Right ventricle myocardium superior (tissue), 1 donor: ENCODE measurements at regions of chr2 and their contacts with region 1.

Region 1: DNA sequence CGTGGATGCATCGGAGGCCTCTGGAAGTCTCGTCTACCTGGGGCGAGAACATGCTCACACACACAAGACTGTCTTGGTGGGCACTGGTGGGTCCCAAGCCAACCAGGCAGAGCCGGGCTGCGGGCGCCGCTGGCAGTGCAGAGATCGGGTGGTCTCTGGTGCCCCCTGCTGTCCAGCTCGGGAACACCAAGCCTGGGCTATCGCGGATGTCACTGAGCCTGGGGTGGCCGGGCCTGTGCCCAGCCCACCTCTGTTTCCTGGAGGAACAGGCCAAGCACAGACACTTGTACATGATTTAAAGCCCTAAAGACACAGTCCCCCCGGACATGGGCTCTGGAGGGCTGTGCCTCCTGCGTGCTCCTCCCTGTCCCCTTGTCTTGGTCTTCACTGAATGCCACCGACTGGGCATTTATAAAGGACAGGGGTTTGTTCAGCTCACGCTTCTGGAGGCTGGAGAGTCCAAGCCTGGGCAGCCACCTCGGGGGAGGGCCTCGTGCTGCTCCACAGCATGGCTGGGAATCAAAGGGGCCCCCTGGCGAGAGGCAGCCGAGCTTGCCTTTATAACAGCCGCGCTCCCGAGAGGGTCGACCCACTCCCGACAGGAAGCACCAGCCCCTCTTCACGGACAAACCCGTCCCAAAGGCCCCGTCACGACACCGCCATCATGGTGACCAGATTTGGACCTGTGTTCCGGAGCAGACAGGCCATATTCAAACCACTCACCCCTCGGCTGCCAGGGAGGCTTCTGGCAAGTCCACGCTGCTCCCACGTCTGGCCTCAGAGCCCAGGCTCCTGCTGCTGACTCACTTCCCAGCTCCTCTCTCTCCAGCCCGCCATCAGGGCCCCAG is 3.6 kb upstream of the OTOS start:
- DNase-seq: peak; percentile 78
- ATAC-seq: peak; percentile 91

Region 2: GRCh38 chr2:240060977-240061591 is 82.9 kb before region 1 on chr2:
- intact Hi-C with region 1: loop called (anchors 2 kb)
- DNase-seq: no peak
- ATAC-seq: peak; percentile 58

Region 3: DNA sequence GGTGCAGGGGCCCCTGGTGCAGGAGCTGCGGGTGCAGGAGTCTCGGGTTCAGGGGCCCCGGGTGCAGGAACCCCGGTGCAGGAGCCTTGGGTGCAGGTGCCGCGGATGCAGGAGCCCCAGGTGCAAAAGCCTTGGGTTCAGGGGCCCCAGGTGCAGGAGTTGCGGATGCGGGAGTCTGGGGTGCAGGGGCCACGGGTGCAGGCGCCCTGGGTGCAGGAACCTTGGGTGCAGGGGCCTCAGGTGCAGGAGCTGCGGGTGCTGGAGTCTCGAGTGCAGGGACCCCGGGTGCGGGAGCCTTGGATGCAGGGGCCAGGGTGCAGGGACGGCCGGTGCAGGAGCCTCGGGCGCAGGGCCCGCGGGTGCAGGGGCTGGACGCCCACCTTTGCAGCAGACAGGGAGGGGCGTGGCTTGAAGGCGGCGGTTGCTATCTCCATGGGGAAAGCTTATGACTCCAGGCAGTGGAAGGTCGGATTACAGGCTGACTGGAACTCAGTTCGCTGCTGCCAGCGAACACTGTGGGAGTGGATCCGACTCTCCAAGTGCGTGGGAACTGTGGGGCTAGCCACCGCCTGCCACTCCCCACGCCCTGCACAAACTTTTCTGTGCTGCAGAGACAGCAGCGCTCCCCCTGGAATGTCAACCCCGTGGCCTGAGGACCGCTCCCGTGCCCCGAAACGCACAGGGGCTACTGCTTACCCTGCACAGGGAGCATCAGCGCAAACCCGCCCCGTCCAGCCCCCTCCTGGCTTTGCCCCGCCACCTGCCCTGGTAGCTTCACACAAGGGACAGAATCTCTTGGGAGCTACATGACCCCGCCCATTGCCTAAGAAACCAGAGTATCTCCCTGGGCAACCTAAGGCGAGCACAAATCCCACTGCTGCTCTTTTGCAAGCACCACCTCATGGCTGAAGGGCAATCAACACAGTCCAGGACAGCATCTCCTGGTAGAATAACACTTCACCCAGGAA is 48.2 kb before region 1 on chr2:
- intact Hi-C with region 1: no loop called
- DNase-seq: no peak
- ATAC-seq: no peak

Region 4: GRCh38 chr2:240293557-240294461 is 149.8 kb after region 1 on chr2:
- intact Hi-C with region 1: no loop called
- DNase-seq: peak; percentile 77
- ATAC-seq: peak; percentile 75